MCF 10A (cell line): ENCODE measurements at regions of chr18 and their contacts with region 1.

Region 1: GRCh38 chr18:6729247-6730091 is at the start of gene ARHGAP28:
- DNase-seq: peak; percentile 80
- H3K4me3 Mint-ChIP-seq: peak within 1 kb of the TSS; percentile 93
- H3K27ac Mint-ChIP-seq: peak within 1 kb of the TSS; percentile 80
- H3K4me1 Mint-ChIP-seq: peaks cover 19% of the 10 kb centered on the region
- H3K27me3 Mint-ChIP-seq: no peaks in the 10 kb centered on the region
- CTCF ChIP-seq: no peak
- total RNA-seq, gene ARHGAP28: 1.9 and 3.0 TPM in 2 replicates

Region 2: DNA sequence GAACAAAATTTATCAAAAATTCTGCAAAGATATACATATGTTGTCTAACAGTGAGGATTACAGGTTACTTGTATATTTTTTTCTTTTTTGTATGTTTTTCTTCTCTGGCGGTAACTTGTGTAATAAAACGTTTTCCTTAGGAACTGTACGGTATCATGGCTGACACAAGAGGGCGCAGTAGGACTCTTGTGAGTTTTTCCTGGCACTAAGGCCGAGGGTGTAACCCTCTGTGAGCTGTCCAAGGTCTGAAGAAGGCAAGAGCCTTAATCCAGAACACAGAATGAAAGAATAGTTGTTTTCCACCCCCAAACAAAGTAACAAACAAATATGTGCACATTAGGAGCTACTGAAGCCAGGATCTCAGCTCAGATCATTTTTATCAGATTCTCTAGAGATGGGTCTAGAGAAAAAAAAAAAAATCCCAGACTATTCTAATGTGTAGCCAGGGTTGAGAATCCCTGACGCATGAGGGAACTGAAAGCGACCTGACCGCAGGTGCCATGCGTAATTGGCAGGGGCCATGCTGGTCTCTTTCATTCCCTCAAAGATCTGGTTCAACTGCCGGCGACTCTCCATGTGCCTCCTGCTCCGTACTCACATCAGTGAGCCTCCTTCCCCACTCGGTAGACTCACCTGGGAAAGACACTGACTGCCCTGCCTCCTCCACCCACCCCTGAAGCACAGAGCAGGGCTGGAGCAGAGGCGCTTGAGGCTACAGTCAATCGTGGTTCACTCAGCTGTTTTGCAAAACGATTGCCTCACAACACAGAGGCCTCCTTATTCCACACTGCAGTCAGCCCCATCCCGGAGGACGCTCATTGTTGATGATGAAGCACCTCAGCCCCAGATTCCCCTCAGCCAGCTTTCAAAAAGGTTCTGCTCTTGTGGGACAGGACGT is 861.0 kb before region 1 on chr18:
- CTCF ChIA-PET with region 1: no interaction called
- POLR2A ChIA-PET with region 1: no interaction called
- intact Hi-C with region 1: loop called (anchors 10 kb)
- DNase-seq: peak; percentile 42
- H3K4me3 Mint-ChIP-seq: no peak overlapping the region
- H3K27ac Mint-ChIP-seq: no peak overlapping the region
- H3K4me1 Mint-ChIP-seq: no peaks in the 10 kb centered on the region
- H3K27me3 Mint-ChIP-seq: peaks cover 20% of the 10 kb centered on the region
- CTCF ChIP-seq: peak; percentile 79

Region 3: DNA sequence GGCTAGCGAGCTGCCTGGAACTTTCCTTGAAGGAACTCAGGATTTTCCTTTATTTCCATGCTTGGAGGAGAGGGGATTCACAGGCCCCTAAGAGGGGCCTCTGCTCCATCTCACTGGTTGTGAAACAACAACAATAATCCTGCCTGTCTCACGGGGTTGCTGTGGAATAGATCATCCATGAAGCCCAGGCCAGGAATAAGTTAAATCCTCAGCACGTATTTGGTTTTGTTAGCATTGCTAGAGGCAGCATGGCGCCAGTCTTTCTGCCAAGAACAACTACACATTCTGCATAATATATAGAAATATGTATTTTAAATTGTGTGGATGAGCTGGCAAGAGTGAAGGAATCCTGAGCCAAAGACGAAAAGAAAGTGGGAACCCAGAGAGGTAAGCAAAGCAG is 233.9 kb before region 1 on chr18:
- CTCF ChIA-PET with region 1: no interaction called
- POLR2A ChIA-PET with region 1: no interaction called
- intact Hi-C with region 1: no loop called
- DNase-seq: no peak
- H3K4me3 Mint-ChIP-seq: no peak overlapping the region
- H3K27ac Mint-ChIP-seq: no peak overlapping the region
- H3K4me1 Mint-ChIP-seq: no peaks in the 10 kb centered on the region
- H3K27me3 Mint-ChIP-seq: peaks cover 1% of the 10 kb centered on the region
- CTCF ChIP-seq: no peak

Region 4: GRCh38 chr18:6543330-6543908 is 186.1 kb before region 1 on chr18:
- CTCF ChIA-PET with region 1: no interaction called
- POLR2A ChIA-PET with region 1: interaction called, 4 read pairs
- intact Hi-C with region 1: loop called (anchors 5 kb)
- DNase-seq: peak; percentile 12
- H3K4me3 Mint-ChIP-seq: no peak overlapping the region
- H3K27ac Mint-ChIP-seq: no peak overlapping the region
- H3K4me1 Mint-ChIP-seq: peaks cover 27% of the 10 kb centered on the region
- H3K27me3 Mint-ChIP-seq: no peaks in the 10 kb centered on the region
- CTCF ChIP-seq: peak; percentile 21

Region 5: DNA sequence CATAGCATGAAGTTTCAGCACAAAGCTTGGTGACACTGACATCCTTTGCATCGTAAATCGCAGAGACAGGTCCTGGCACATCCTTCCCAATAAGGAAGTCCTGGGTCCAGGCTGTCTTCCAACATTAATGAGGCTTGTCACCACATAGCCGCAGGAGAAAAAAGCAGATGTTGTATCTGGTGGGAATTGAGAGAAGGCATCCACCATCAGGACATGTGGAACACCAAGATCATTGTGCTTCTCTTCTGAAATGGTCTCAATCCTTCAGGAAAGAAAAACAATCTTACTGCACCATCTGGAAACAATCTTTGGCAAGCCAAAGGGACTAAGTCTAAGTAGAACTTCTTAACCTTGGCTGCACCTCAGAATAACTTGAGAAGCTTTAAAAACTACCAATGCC is 119.0 kb before region 1 on chr18:
- CTCF ChIA-PET with region 1: no interaction called
- POLR2A ChIA-PET with region 1: no interaction called
- intact Hi-C with region 1: no loop called
- DNase-seq: no peak
- H3K4me3 Mint-ChIP-seq: no peak overlapping the region
- H3K27ac Mint-ChIP-seq: no peak overlapping the region
- H3K4me1 Mint-ChIP-seq: peaks cover 10% of the 10 kb centered on the region
- H3K27me3 Mint-ChIP-seq: no peaks in the 10 kb centered on the region
- CTCF ChIP-seq: no peak

Region 6: DNA sequence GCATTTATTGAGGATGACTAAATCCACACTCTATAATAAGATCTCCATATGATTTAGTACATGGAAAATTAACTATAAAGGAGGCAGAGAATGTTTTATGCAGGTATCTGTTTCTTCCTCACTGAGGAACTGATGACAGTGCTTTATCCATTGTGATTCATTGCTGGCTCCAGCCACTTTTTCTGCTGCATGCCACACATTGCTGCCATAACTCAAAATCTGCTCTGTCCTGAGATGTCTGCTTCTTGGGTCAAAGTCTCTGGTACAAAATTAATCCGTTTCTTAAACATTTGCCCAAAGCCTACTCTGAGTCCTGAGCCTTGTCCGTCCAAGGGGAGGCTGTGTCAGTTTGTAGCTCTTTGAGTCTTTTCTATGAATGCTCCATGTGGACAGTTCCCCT is 15.5 kb before region 1 on chr18:
- CTCF ChIA-PET with region 1: no interaction called
- POLR2A ChIA-PET with region 1: no interaction called
- intact Hi-C with region 1: no loop called
- DNase-seq: no peak
- H3K4me3 Mint-ChIP-seq: no peak overlapping the region
- H3K27ac Mint-ChIP-seq: no peak overlapping the region
- H3K4me1 Mint-ChIP-seq: peaks cover 5% of the 10 kb centered on the region
- H3K27me3 Mint-ChIP-seq: no peaks in the 10 kb centered on the region
- CTCF ChIP-seq: no peak

Region 7: DNA sequence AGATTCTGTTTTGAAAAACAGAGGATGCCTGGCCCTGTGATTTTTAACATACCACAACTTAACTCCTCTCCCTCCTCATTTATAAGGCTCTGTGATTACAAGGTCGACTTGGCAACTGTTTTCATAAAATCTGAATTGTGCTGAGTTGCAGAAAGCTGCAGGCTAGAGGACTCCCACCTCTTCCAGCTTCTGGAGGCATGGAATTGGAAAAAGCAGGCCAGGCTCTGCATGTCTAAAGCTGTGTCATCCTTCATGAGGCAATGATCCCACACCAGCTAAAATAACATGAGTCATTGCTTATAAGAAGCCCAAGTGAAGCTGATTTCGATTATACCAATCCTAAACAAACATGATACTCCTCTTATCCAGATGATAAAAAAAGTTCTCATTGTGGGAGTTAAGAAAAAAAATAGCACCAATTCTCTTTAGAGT is 11.8 kb after region 1 on chr18:
- CTCF ChIA-PET with region 1: interaction called, 7 read pairs
- POLR2A ChIA-PET with region 1: interaction called, 18 read pairs
- intact Hi-C with region 1: no loop called
- DNase-seq: peak; percentile 94
- H3K4me3 Mint-ChIP-seq: no peak overlapping the region
- H3K27ac Mint-ChIP-seq: peak overlapping the region; percentile 64
- H3K4me1 Mint-ChIP-seq: peaks cover 31% of the 10 kb centered on the region
- H3K27me3 Mint-ChIP-seq: no peaks in the 10 kb centered on the region
- CTCF ChIP-seq: no peak